ENCODE measurements at regions of chr5 and their contacts with region 1.

Region 1: DNA sequence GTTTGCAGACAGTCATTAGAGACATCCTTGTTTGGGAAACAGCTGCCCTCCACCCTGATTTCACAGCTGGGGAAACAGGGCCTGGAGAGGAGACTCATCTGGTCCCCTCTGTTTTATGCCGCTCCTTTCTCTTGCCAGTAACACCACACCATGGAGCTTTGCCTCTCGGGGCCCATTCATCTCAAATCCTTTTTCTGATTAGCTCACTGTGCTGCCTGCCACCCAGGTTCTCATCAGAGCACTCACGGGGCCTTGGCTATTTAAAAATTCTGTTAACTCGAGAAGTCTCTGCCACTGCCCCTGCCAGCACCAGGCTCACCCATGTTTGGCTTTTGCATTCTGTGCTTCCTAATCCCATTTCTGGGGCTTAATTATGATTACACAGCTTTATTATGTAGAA is 36.8 kb upstream of the C5orf58 start:
- DNase-seq: no peak
- ATAC-seq: no peak
- H3K4me3 ChIP-seq: no peak overlapping the region
- H3K4me3 Mint-ChIP-seq: no peak overlapping the region
- H3K27ac ChIP-seq: no peak overlapping the region
- H3K27ac Mint-ChIP-seq: no peak overlapping the region
- H3K4me1 ChIP-seq: no peaks in the 10 kb centered on the region
- H3K4me1 Mint-ChIP-seq: no peaks in the 10 kb centered on the region
- H3K27me3 ChIP-seq: peaks cover 0 to 3% (median 0%) of the 10 kb centered on the region in 4 experiments
- H3K27me3 Mint-ChIP-seq: peaks cover 15% of the 10 kb centered on the region
- CTCF ChIP-seq: no peak

Region 2: GRCh38 chr5:170183816-170184687 is 11.9 kb before region 1 on chr5:
- CTCF ChIA-PET with region 1: interaction called, 10 read pairs
- POLR2A ChIA-PET with region 1: no interaction called
- intact Hi-C with region 1: no loop called
- DNase-seq: peak; percentile 30
- ATAC-seq: peak; percentile 31
- H3K4me3 ChIP-seq: no peak overlapping the region
- H3K4me3 Mint-ChIP-seq: no peak overlapping the region
- H3K27ac ChIP-seq: no peak overlapping the region
- H3K27ac Mint-ChIP-seq: no peak overlapping the region
- H3K4me1 ChIP-seq: no peaks in the 10 kb centered on the region
- H3K4me1 Mint-ChIP-seq: no peaks in the 10 kb centered on the region
- H3K27me3 ChIP-seq: no peaks in the 10 kb centered on the region
- H3K27me3 Mint-ChIP-seq: peaks cover 6% of the 10 kb centered on the region
- CTCF ChIP-seq: peak; percentile 60

Region 3: DNA sequence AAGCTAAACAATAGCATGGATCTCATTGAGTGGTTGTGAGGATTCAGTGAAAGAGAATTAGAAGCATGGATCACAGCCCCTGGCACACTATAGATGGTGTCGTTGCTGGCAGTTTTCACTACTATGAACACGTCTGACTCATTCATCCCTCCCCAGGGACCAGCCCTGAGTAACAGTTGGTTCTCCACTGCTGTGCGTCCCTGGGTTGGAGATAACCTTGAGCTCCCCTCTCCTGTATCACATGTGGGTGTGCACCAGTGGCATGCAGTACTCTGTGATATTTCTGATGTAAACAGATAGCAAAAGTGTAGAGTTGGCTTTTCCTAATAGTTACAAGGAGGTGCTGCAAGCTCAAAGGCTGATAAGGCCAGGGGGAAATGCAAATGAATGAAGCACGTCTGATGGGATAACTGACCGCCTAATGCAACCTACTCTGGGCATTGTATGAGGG is 110.4 kb after region 1 on chr5:
- CTCF ChIA-PET with region 1: no interaction called
- POLR2A ChIA-PET with region 1: no interaction called
- intact Hi-C with region 1: no loop called
- DNase-seq: no peak
- ATAC-seq: peak; percentile 61
- H3K4me3 ChIP-seq: no peak overlapping the region
- H3K4me3 Mint-ChIP-seq: no peak overlapping the region
- H3K27ac ChIP-seq: no peak overlapping the region
- H3K27ac Mint-ChIP-seq: no peak overlapping the region
- H3K4me1 ChIP-seq: peaks cover 19 to 20% of the 10 kb centered on the region in 2 donors
- H3K4me1 Mint-ChIP-seq: peaks cover 27% of the 10 kb centered on the region
- H3K27me3 ChIP-seq: peaks cover 0 to 9% (median 0%) of the 10 kb centered on the region in 4 experiments
- H3K27me3 Mint-ChIP-seq: peaks cover 13% of the 10 kb centered on the region
- CTCF ChIP-seq: no peak